Activated T-helper 2 cell treated with anti-CD3 and anti-CD28 coated beads, Interferon-gamma antibody, Interleukin-2, Interleukin-4, amounts not matched to agents 10 μg/mL and 5 μg/mL and 100 μg/mL, durations not matched to agents 14 hours and 24 hours and 36 hours (primary cell): ENCODE measurements at regions of chr4 and their contacts with region 1.

Region 1: DNA sequence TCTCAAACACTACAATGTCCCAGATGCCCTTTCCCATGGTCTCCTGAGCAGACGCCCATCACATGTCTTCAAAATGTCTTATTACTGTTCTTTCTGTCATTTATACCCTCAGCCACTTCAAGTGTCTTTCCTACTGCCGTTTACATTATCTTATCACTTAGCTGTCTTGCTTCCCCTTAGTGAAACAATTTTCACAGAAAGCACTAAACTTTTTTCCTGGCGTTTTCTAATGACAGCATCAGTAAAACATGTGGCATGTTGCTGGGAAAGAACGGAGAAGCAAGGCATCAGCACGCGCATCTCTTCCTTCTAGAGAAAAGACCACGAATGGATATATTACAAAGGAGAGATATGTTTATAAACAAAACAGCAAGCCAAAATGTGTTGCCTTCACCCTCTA is 189.7 kb upstream of the SLIT2 start:
- DNase-seq: no peak
- H3K4me3 Mint-ChIP-seq: no peak overlapping the region
- H3K27ac Mint-ChIP-seq: no peak overlapping the region
- H3K4me1 Mint-ChIP-seq: no peaks in the 10 kb centered on the region
- H3K27me3 Mint-ChIP-seq: no peaks in the 10 kb centered on the region

Region 2: DNA sequence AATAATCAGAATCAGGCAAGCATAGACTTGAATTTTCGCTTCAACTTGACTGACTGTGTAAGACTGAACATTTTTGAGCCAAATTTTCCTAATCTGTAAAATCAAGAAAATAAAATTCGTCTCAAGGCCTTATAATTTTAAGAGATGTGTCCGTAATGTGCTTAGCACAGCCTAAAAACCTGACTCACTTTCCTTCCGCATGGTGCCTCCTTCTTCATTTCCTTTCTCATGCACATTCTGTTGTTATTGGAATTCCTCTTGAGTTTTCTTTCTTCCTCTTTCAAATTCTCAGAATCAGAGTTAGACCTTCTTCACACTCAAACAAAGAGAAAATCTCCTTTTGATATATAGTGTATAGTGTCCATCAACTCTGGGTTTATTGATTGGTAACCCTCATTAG is 19.3 kb before region 1 on chr4:
- intact Hi-C with region 1: loop called (anchors 1 kb)
- DNase-seq: no peak
- H3K4me3 Mint-ChIP-seq: no peak overlapping the region
- H3K27ac Mint-ChIP-seq: no peak overlapping the region
- H3K4me1 Mint-ChIP-seq: no peaks in the 10 kb centered on the region
- H3K27me3 Mint-ChIP-seq: no peaks in the 10 kb centered on the region

Region 3: GRCh38 chr4:20106921-20107320 is 44.9 kb after region 1 on chr4:
- intact Hi-C with region 1: no loop called
- DNase-seq: no peak
- H3K4me3 Mint-ChIP-seq: no peak overlapping the region
- H3K27ac Mint-ChIP-seq: no peak overlapping the region
- H3K4me1 Mint-ChIP-seq: no peaks in the 10 kb centered on the region
- H3K27me3 Mint-ChIP-seq: no peaks in the 10 kb centered on the region

Region 4: DNA sequence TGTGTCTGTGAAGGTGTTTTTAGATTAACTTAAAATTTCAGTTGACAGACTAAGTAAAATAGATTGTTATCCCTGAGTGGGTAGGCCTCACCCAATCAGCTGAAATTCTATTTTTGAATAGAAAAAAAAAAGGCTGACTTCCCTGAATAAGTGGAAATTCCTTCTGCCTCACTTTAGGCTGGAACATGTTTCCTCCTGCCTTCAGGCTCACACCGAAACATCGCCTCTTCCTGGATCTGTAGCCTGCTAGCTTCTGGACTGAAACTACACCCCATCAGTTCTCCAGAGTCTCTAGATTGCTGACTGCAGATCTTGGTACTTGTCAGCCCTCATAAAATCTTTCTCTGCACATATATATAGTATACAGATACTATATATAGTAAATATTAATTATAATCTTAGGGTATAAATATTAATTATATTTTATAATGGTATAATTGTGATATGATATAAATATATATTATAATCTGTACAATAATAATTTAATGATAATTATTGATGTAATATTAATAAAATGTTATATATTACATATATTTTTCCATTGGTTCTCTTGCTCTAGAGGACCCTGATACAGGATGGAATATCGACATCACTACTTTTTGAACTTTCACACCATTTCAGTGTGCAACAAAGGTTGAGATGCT is 176.0 kb after region 1 on chr4:
- intact Hi-C with region 1: no loop called
- DNase-seq: no peak
- H3K4me3 Mint-ChIP-seq: no peak overlapping the region
- H3K27ac Mint-ChIP-seq: no peak overlapping the region
- H3K4me1 Mint-ChIP-seq: no peaks in the 10 kb centered on the region
- H3K27me3 Mint-ChIP-seq: no peaks in the 10 kb centered on the region